Psoas muscle (tissue), 8 donors: ENCODE measurements at regions of chr1 and their contacts with region 1.

Region 1: GRCh38 chr1:19651141-19651737 is 7.1 kb downstream of the NBL1 start:
- DNase-seq: peak; percentile 61 to 79
- ATAC-seq: peak; percentile 81 to 89 (median 86)
- H3K4me3 ChIP-seq: peak overlapping the region; percentile 18
- H3K27ac ChIP-seq: peak overlapping the region; percentile 53
- H3K4me1 ChIP-seq: peaks cover 13% of the 10 kb centered on the region
- H3K27me3 ChIP-seq: no peaks in the 10 kb centered on the region
- CTCF ChIP-seq: peak; percentile 73

Region 2: DNA sequence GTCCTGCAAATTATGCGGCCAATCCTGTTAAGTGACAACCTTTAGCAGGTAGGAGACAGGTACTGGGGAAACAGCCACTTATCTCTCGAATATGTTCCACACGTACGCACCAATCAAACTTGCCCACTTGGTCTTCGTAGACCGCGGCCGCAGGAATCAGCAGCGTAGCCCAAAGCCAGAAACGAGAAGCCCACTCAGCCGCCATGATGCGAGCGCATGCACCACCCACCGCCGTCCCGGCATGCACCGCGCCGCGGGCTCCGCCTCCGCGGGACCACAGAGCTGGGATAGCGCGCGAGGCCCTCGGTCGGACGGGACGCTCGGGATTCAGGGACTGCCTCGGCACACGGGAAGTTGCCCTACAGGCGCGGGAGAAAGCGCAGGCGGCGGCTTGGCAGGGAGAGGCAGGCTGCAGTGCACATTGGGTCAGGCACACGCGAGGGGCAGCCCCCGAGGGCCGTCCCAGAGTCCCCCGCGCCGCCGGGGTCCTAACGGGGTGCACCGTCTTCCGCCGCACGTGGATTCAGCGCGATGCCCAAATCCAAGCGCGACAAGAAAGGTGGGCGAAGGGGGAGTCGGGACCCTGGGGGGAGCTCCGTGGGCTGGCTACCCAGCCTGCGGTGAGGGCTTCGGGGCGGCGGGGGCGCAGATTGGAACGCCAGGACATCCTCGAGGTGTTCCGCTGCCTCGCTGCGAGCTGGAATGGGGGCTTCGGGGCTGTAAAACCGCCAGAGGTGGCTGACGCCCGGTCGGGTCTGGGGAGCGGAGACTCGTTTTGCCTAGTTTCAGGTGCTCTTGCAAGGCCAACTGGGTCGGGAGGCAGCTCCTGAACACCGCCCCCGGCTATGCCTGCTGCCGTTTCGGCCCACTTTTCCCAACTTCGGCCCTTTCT is 399.7 kb before region 1 on chr1 and contains the starts of genes EMC1 and MRTO4:
- intact Hi-C with region 1: loop called in 1 of 2 experiments (anchors 10 kb)
- DNase-seq: peak; percentile 91 to 93
- ATAC-seq: peak; percentile 95 to 97 (median 96)
- H3K4me3 ChIP-seq: peak within 1 kb of the TSS; percentile 93
- H3K27ac ChIP-seq: peak within 1 kb of the TSS; percentile 95
- H3K4me1 ChIP-seq: peaks cover 21% of the 10 kb centered on the region
- H3K27me3 ChIP-seq: no peaks in the 10 kb centered on the region
- CTCF ChIP-seq: no peak
- total RNA-seq, gene EMC1: 31.1 to 38.5 (median 35.1) TPM
- total RNA-seq, gene MRTO4: 19.9 to 35.8 (median 28.8) TPM

Region 3: GRCh38 chr1:19341201-19342072 is 309.8 kb before region 1 on chr1:
- intact Hi-C with region 1: loop called (anchors 1 to 2 kb)
- DNase-seq: peak; percentile 77 to 85
- ATAC-seq: peak; percentile 52 to 72 (median 62)
- H3K4me3 ChIP-seq: no peak overlapping the region
- H3K27ac ChIP-seq: no peak overlapping the region
- H3K4me1 ChIP-seq: no peaks in the 10 kb centered on the region
- H3K27me3 ChIP-seq: no peaks in the 10 kb centered on the region
- CTCF ChIP-seq: peak; percentile 82

Region 4: GRCh38 chr1:19384113-19384512 is 267.1 kb before region 1 on chr1:
- intact Hi-C with region 1: loop called in 1 of 2 experiments (anchors 10 kb)
- DNase-seq: no peak
- ATAC-seq: peak in 1 of 4 donors; percentile 41
- H3K4me3 ChIP-seq: no peak overlapping the region
- H3K27ac ChIP-seq: no peak overlapping the region
- H3K4me1 ChIP-seq: peaks cover 21% of the 10 kb centered on the region
- H3K27me3 ChIP-seq: no peaks in the 10 kb centered on the region
- CTCF ChIP-seq: no peak

Region 5: DNA sequence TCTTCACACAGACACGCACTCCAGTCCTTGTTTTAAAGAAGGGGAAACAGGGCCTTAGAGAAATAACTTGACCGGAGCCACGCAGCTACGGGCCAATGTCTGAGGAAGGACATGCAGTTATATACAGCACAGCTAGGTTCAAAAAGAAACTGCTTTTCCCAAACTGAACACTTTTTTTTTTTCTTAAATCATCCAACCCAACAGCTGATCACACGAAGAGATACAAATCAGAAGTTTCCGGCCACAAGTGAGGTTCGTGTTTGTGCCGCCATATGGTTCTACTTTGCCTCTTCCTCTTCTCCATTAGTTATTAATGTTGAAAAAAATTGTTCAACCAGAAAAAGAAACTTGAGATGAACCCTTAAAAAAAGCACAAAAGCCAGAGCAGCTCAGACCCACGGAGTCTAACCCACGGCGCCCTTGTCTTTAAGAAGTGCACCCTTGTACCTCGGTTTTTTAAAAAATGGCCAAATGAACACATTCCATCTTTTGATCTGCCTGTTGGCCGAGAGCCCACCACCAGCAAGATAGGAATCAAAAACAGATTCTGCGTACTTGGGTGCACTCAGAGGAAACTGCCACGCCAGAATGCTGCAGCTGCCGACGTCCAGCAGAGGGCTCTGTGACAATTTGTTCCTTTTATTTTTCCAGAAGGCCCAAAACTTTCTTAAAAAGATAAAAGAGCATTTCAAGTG is 260.2 kb before region 1 on chr1:
- intact Hi-C with region 1: loop called (anchors 2 to 10 kb)
- DNase-seq: peak; percentile 58 to 75
- ATAC-seq: peak in 3 of 4 donors; percentile 33 to 68 (median 37)
- H3K4me3 ChIP-seq: no peak overlapping the region
- H3K27ac ChIP-seq: peak overlapping the region; percentile 52
- H3K4me1 ChIP-seq: peaks cover 37% of the 10 kb centered on the region
- H3K27me3 ChIP-seq: no peaks in the 10 kb centered on the region
- CTCF ChIP-seq: peak; percentile 67

Region 6: DNA sequence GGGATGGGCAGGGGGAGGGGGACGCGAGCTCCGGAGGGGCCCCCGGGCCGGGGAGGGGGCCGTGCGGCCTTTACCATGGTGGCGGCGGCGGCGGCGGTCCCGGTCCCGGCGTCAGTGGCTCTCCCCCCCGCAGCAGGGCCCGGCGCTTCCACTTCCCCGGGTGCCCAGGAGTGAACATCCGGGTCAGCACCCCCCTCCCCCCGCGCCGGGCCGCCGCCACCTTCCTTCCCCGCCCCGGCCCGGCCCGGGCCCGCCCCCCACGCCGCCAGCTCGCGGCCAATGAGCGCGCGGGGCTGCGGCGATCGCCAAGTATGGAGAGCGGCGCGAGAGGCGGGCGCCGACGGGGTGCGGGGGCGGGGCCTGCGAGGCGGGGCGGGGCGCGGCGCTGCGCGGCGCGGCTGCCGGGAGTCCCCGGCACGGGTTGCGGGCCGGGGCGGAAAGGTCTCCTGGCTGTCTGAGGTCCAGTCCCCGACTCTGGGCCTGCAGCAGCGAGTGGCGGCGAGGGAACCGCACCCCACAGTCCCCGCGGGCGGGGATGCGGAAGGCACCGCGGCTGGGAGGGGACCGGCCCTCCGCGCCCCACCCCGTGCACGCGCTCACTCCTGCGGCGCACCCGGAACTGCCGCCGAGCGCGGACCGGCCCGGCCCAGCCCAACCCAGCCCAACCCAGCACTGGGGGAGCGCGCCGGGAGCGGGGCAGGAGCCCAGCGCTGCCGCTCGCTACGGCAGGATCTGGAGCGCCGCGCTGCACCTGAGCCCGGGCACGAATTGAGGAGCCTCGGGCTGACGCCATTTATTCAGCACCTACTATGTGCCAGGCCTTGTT is 165.7 kb before region 1 on chr1 and contains the start of gene CAPZB:
- intact Hi-C with region 1: loop called in 1 of 2 experiments (anchors 1 kb)
- DNase-seq: peak; percentile 96 to 98
- ATAC-seq: peak; percentile 89 to 93 (median 92)
- H3K4me3 ChIP-seq: peak within 1 kb of the TSS; percentile 74
- H3K27ac ChIP-seq: peak within 1 kb of the TSS; percentile 91
- H3K4me1 ChIP-seq: peaks cover 52% of the 10 kb centered on the region
- H3K27me3 ChIP-seq: no peaks in the 10 kb centered on the region
- CTCF ChIP-seq: no peak
- total RNA-seq, gene CAPZB: 207 to 284 (median 232) TPM